ENCODE measurements at regions of chr2 and their contacts with region 1.

Region 1: DNA sequence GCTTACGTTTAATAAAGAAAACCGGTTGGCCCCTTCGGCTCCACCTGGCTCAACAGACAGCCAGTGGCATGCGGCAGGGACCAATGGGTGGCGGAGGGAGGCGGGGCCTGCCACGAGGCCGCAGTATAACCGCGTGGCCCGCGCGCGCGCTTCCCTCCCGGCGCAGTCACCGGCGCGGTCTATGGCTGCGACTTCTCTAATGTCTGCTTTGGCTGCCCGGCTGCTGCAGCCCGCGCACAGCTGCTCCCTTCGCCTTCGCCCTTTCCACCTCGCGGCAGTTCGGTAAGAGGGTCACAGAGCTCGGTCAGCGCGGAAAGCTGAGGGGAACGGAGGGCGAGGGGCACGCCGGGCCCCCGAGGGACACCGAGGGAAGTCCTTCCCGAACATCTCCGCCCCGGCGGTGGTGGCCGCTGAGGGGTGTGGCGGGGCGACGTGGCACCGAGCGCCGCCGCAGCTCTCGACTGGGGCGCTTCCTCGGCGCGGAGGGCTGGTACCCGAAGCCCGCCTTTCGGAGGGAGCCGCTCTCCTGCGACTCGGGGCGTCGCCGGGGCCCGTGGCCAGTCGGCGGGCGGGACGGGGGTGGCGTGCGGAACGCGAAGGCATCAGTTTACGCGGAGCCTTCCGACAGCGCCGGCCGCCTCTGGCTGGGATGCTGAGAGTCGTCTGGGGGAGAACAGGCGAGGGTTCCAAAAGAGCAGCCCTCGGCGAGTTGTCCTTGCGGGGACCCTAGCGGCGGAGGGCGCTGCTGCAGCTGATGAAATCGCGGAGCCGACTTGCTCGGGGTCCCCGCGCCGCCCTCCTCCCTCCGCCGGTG is at the start of gene MTHFD2:
- DNase-seq: peak; percentile 98
- H3K4me3 Mint-ChIP-seq: peak within 1 kb of the TSS; percentile 96
- H3K27ac Mint-ChIP-seq: peak within 1 kb of the TSS; percentile 100
- H3K4me1 Mint-ChIP-seq: peaks cover 38% of the 10 kb centered on the region
- H3K27me3 Mint-ChIP-seq: no peaks in the 10 kb centered on the region
- total RNA-seq, gene MTHFD2: 418 and 439 TPM in 2 replicates

Region 2: GRCh38 chr2:74002487-74003391 is 195.9 kb before region 1 on chr2:
- intact Hi-C with region 1: loop called (anchors 2 kb)
- DNase-seq: peak; percentile 95
- H3K4me3 Mint-ChIP-seq: peak overlapping the region; percentile 84
- H3K27ac Mint-ChIP-seq: peak overlapping the region; percentile 62
- H3K4me1 Mint-ChIP-seq: peaks cover 65% of the 10 kb centered on the region
- H3K27me3 Mint-ChIP-seq: no peaks in the 10 kb centered on the region

Region 3: DNA sequence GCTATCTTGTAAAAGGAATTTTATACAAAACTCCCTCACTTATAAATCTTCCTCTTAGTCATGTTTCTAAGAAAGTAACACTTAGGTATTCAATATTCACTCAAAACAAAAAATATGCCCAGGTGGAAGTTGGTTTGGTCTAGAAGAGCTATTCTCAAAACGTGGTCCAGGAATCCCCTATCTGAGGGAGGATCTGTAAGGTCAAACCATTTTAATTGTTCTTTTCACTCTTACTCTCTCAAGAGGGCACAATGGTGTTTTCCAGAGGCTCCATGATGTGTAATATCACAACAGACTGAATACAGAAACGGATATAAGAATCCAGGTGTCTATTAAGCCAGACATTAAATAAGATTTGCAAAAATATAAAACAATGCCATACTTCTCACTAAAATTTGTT is 29.9 kb before region 1 on chr2:
- intact Hi-C with region 1: loop called (anchors 5 kb)
- DNase-seq: no peak
- H3K4me3 Mint-ChIP-seq: no peak overlapping the region
- H3K27ac Mint-ChIP-seq: peak overlapping the region; percentile 56
- H3K4me1 Mint-ChIP-seq: peaks cover 21% of the 10 kb centered on the region
- H3K27me3 Mint-ChIP-seq: no peaks in the 10 kb centered on the region

Region 4: GRCh38 chr2:74178201-74179062 is 20.2 kb before region 1 on chr2 and contains the start of gene MOB1A:
- intact Hi-C with region 1: loop called (anchors 1 kb)
- DNase-seq: peak; percentile 100
- H3K4me3 Mint-ChIP-seq: peak within 1 kb of the TSS; percentile 84
- H3K27ac Mint-ChIP-seq: peak within 1 kb of the TSS; percentile 90
- H3K4me1 Mint-ChIP-seq: peaks cover 43% of the 10 kb centered on the region
- H3K27me3 Mint-ChIP-seq: no peaks in the 10 kb centered on the region
- total RNA-seq, gene MOB1A: 203 and 204 TPM in 2 replicates

Region 5: DNA sequence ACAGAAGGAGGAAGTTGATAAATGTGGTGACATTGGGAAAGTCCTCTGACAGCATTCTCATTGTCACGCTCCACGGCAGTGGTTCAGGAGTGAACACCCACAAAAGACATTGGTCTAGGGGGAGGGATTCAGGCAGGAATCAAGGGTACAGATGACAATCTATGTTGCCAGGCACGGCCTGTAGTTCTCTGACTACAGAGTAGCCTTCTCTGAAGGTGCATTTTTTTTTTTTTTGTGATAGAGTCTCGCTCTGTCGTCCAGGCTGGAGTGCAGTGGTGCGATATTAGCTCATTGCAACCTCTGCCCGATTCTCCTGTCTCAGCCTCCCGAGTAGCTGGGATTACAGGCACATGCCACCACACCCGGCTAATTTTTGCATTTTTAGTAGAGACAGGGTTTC is 12.6 kb before region 1 on chr2:
- intact Hi-C with region 1: loop called (anchors 1 kb)
- DNase-seq: peak; percentile 90
- H3K4me3 Mint-ChIP-seq: peak overlapping the region; percentile 67
- H3K27ac Mint-ChIP-seq: peak overlapping the region; percentile 93
- H3K4me1 Mint-ChIP-seq: peaks cover 40% of the 10 kb centered on the region
- H3K27me3 Mint-ChIP-seq: no peaks in the 10 kb centered on the region

Region 6: DNA sequence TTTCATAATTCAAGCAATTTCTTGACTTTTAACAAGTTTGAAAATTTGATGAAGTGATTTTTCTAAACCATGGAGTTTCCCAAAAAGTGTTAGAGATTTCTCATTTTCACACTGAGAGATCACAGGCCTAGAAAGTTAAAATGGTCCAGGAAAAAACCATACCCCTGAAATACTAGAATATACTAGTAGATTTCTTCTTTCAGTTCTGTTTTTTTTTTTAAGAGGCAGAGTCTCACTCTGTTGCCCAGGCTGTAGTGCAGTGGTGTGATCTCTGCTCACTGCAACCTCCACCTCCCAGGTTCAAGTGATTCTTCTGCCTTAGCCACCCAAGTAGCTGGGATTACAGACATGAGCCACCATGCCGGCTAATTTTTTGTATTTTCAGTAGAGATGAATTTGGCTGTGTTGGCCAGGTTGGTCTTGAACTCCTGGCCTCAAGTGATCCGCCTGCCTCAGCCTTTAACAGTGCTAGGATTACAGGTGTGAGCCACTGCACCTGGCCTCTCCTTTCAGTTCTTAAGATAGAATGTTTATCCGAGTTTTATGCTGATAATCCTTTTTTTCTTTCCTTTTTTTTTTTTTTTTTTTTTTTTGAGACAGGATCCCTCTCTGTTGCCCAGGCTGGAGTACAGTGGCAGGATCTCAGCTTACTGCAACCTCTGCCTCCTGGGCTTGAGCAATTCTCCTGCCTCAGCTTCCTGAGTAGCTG is 14.2 kb after region 1 on chr2:
- intact Hi-C with region 1: no loop called
- DNase-seq: no peak
- H3K4me3 Mint-ChIP-seq: no peak overlapping the region
- H3K27ac Mint-ChIP-seq: no peak overlapping the region
- H3K4me1 Mint-ChIP-seq: peaks cover 12% of the 10 kb centered on the region
- H3K27me3 Mint-ChIP-seq: no peaks in the 10 kb centered on the region

Region 7: DNA sequence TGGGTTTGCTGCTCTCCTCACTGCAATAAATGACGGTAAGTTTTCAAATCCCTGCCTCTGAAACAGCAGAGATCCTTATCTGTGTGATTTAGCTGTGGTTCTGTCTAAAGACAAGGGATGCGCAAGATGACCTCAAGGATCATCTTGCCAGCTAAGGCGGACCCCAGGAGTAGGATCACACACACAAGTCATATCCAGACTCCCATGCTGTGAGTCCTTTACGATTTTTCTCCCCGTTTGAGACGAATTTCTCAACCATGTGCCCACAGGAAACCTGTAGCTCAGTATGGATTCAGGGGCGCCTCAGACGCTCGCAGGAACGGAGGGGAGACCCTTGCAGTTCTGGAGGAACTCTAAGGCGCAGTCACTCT is 192.5 kb after region 1 on chr2:
- intact Hi-C with region 1: no loop called
- DNase-seq: no peak
- H3K4me3 Mint-ChIP-seq: peak overlapping the region; percentile 93
- H3K27ac Mint-ChIP-seq: peak overlapping the region; percentile 83
- H3K4me1 Mint-ChIP-seq: peaks cover 8% of the 10 kb centered on the region
- H3K27me3 Mint-ChIP-seq: peaks cover 10% of the 10 kb centered on the region